Aorta (tissue), 5 donors: ENCODE measurements at regions of chr17 and their contacts with region 1.

Region 1: GRCh38 chr17:28992625-28993600 is 12.9 kb downstream of the SEZ6 start:
- DNase-seq: no peak
- ATAC-seq: no peak
- H3K4me3 ChIP-seq: no peak overlapping the region
- H3K27ac ChIP-seq: no peak overlapping the region
- H3K4me1 ChIP-seq: no peaks in the 10 kb centered on the region
- H3K27me3 ChIP-seq: no peaks in the 10 kb centered on the region

Region 2: GRCh38 chr17:29326023-29326813 is 333.3 kb after region 1 on chr17:
- intact Hi-C with region 1: loop called in 1 of 2 experiments (anchors 10 kb)
- DNase-seq: no peak
- ATAC-seq: no peak
- H3K4me3 ChIP-seq: no peak overlapping the region
- H3K27ac ChIP-seq: no peak overlapping the region
- H3K4me1 ChIP-seq: no peaks in the 10 kb centered on the region
- H3K27me3 ChIP-seq: no peaks in the 10 kb centered on the region